ENCODE measurements at regions of chr5 and their contacts with region 1.

Region 1: GRCh38 chr5:14809369-14810155 is 62.0 kb downstream of the ANKH start:
- DNase-seq: peak; percentile 16 to 74 (median 57)
- ATAC-seq: peak; percentile 94
- H3K4me3 ChIP-seq: peak overlapping the region; percentile 21
- H3K4me3 Mint-ChIP-seq: peak overlapping the region; percentile 56 to 87 (median 78)
- H3K27ac ChIP-seq: peak overlapping the region; percentile 50
- H3K27ac Mint-ChIP-seq: peak overlapping the region; percentile 72 to 93 (median 91)
- H3K4me1 ChIP-seq: peaks cover 38 to 42% of the 10 kb centered on the region in 2 donors
- H3K4me1 Mint-ChIP-seq: peaks cover 40 to 85% (median 63%) of the 10 kb centered on the region in 7 donors
- H3K27me3 ChIP-seq: no peaks in the 10 kb centered on the region
- H3K27me3 Mint-ChIP-seq: no peaks in the 10 kb centered on the region

Region 2: DNA sequence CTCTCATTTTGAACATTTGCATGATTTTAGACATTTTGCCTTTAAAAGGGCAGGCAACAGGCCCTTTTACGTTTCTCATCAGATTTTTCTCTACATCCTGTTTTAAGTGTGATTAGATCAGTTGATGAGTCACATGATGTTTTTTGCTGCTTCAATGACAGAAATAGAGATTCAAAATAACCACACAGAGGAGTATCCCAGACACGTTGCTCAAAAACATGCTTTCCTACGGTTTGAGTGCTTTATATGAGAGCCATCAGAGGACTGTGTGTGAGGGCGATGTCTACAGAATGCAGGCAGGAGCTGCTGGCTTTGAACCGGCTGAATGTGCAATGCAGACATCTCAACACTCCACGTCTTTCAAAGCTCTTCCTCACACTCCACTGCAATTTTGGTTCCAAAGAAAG is 102.9 kb before region 1 on chr5:
- CTCF ChIA-PET with region 1: no interaction called
- POLR2A ChIA-PET with region 1: interaction called, 6 read pairs
- intact Hi-C with region 1: loop called in 1 of 2 experiments (anchors 1 kb)
- DNase-seq: peak in 8 of 9 donors; percentile 33 to 88 (median 84)
- ATAC-seq: peak; percentile 96
- H3K4me3 ChIP-seq: peak overlapping the region; percentile 4
- H3K4me3 Mint-ChIP-seq: peak overlapping the region; percentile 74 to 94 (median 86)
- H3K27ac ChIP-seq: peak overlapping the region; percentile 72
- H3K27ac Mint-ChIP-seq: peak overlapping the region; percentile 96 to 100 (median 99)
- H3K4me1 ChIP-seq: peaks cover 34 to 75% of the 10 kb centered on the region in 2 donors
- H3K4me1 Mint-ChIP-seq: peaks cover 50 to 96% (median 86%) of the 10 kb centered on the region in 7 donors
- H3K27me3 ChIP-seq: no peaks in the 10 kb centered on the region
- H3K27me3 Mint-ChIP-seq: no peaks in the 10 kb centered on the region

Region 3: GRCh38 chr5:14727428-14727865 is 82.1 kb before region 1 on chr5:
- CTCF ChIA-PET with region 1: no interaction called
- POLR2A ChIA-PET with region 1: no interaction called
- intact Hi-C with region 1: loop called in 1 of 2 experiments (anchors 5 kb)
- DNase-seq: peak; percentile 47 to 79 (median 69)
- ATAC-seq: peak; percentile 77
- H3K4me3 ChIP-seq: no peak overlapping the region
- H3K4me3 Mint-ChIP-seq: no peak overlapping the region
- H3K27ac ChIP-seq: no peak overlapping the region
- H3K27ac Mint-ChIP-seq: peak overlapping the region in 5 of 9 donors; percentile 5 to 49 (median 42)
- H3K4me1 ChIP-seq: peaks cover 0 to 4% of the 10 kb centered on the region in 2 donors
- H3K4me1 Mint-ChIP-seq: peaks cover 8 to 22% (median 16%) of the 10 kb centered on the region in 7 donors
- H3K27me3 ChIP-seq: no peaks in the 10 kb centered on the region
- H3K27me3 Mint-ChIP-seq: no peaks in the 10 kb centered on the region

Region 4: GRCh38 chr5:14775857-14776256 is 33.7 kb before region 1 on chr5:
- CTCF ChIA-PET with region 1: no interaction called
- POLR2A ChIA-PET with region 1: no interaction called
- intact Hi-C with region 1: loop called in 1 of 2 experiments (anchors 5 kb)
- DNase-seq: no peak
- ATAC-seq: no peak
- H3K4me3 ChIP-seq: no peak overlapping the region
- H3K4me3 Mint-ChIP-seq: no peak overlapping the region
- H3K27ac ChIP-seq: no peak overlapping the region
- H3K27ac Mint-ChIP-seq: peak overlapping the region in 4 of 9 donors; percentile 1 to 41 (median 25)
- H3K4me1 ChIP-seq: no peaks in the 10 kb centered on the region
- H3K4me1 Mint-ChIP-seq: peaks cover 3 to 81% (median 56%) of the 10 kb centered on the region in 7 donors
- H3K27me3 ChIP-seq: no peaks in the 10 kb centered on the region
- H3K27me3 Mint-ChIP-seq: no peaks in the 10 kb centered on the region

Region 5: DNA sequence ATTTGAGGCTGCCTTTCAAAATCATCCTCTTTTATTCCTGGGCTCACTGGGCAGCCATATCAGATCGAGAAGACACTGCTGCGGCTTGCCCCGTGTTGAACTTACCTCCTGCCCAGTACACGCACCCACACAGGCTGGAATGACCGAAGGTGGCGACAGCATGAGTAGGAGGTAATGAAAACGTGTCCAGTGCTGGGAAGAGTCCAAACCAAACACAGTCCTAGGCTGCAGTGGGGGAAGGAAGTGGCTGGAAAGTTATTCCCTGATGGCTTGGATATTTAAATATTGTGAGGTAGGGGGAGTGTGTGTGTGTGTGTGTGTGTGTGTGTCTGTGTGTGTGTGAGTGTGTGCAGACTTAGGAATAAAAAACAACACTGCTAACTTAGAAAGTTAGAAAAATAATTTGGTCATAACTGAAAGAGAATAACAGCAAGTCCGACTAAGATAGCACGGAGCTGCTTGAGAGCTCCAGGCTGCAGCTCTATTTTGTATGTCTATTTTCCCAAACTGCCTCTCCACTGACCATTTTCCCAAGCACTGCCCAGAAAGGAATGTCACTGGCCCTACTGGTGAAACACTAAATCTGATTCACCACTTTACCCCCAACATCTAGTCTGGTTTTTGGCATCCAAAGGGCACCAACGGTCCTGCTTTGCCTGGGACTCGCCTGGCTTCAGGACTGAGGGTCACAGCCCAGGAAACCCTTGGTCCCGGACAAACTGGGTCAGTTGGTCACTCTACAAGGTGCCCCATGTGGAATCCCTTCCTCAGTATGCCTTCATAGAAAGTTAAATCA is 20.8 kb after region 1 on chr5:
- CTCF ChIA-PET with region 1: interaction called, 3 read pairs
- POLR2A ChIA-PET with region 1: no interaction called
- intact Hi-C with region 1: loop called in 1 of 2 experiments (anchors 2 kb)
- DNase-seq: no peak
- ATAC-seq: no peak
- H3K4me3 ChIP-seq: no peak overlapping the region
- H3K4me3 Mint-ChIP-seq: no peak overlapping the region
- H3K27ac ChIP-seq: no peak overlapping the region
- H3K27ac Mint-ChIP-seq: peak overlapping the region in 3 of 9 donors; percentile 26 to 43 (median 37)
- H3K4me1 ChIP-seq: no peaks in the 10 kb centered on the region
- H3K4me1 Mint-ChIP-seq: peaks cover 6 to 99% (median 70%) of the 10 kb centered on the region in 7 donors
- H3K27me3 ChIP-seq: no peaks in the 10 kb centered on the region
- H3K27me3 Mint-ChIP-seq: no peaks in the 10 kb centered on the region

Region 6: GRCh38 chr5:14925326-14925725 is 115.8 kb after region 1 on chr5:
- CTCF ChIA-PET with region 1: no interaction called
- POLR2A ChIA-PET with region 1: no interaction called
- intact Hi-C with region 1: loop called in 1 of 2 experiments (anchors 5 kb)
- DNase-seq: no peak
- ATAC-seq: no peak
- H3K4me3 ChIP-seq: no peak overlapping the region
- H3K4me3 Mint-ChIP-seq: peak overlapping the region in 7 of 10 donors; percentile 17 to 72 (median 54)
- H3K27ac ChIP-seq: no peak overlapping the region
- H3K27ac Mint-ChIP-seq: peak overlapping the region; percentile 53 to 83 (median 78)
- H3K4me1 ChIP-seq: peaks cover 11 to 14% of the 10 kb centered on the region in 2 donors
- H3K4me1 Mint-ChIP-seq: peaks cover 6 to 38% (median 26%) of the 10 kb centered on the region in 7 donors
- H3K27me3 ChIP-seq: no peaks in the 10 kb centered on the region
- H3K27me3 Mint-ChIP-seq: no peaks in the 10 kb centered on the region

Region 7: DNA sequence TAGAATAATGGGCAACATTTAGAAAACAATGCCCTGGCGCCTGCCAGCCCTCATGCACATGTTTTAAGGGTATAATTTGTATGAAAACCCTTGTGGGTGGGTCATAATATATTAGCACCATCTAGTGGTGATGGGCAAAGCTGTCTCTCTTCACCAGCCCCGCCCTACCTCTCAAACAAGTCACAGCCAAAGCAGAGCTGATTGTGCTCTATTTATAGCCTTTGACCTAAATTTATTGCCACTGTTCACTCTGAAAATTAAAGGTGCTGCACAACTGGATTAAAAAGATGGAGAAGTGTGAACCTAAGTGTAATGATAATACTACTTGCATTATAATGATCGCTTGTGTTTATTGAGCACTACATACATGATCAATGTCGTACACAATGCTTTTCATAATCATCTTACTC is 194.0 kb after region 1 on chr5:
- CTCF ChIA-PET with region 1: no interaction called
- POLR2A ChIA-PET with region 1: no interaction called
- intact Hi-C with region 1: loop called in 1 of 2 experiments (anchors 1 kb)
- DNase-seq: peak; percentile 10 to 77 (median 69)
- ATAC-seq: peak; percentile 96
- H3K4me3 ChIP-seq: no peak overlapping the region
- H3K4me3 Mint-ChIP-seq: no peak overlapping the region
- H3K27ac ChIP-seq: no peak overlapping the region
- H3K27ac Mint-ChIP-seq: peak overlapping the region in 1 of 9 donors; percentile 33
- H3K4me1 ChIP-seq: no peaks in the 10 kb centered on the region
- H3K4me1 Mint-ChIP-seq: peaks cover 0 to 20% (median 0%) of the 10 kb centered on the region in 7 donors
- H3K27me3 ChIP-seq: peaks cover 0 to 3% of the 10 kb centered on the region in 2 donors
- H3K27me3 Mint-ChIP-seq: peaks cover 0 to 38% (median 0%) of the 10 kb centered on the region in 5 donors

Region 8: GRCh38 chr5:15103142-15103541 is 293.6 kb after region 1 on chr5:
- CTCF ChIA-PET with region 1: no interaction called
- POLR2A ChIA-PET with region 1: no interaction called
- intact Hi-C with region 1: no loop called
- DNase-seq: peak in 3 of 9 donors; percentile 2 to 10 (median 2)
- ATAC-seq: peak; percentile 74
- H3K4me3 ChIP-seq: no peak overlapping the region
- H3K4me3 Mint-ChIP-seq: peak overlapping the region in 1 of 10 donors; percentile 13
- H3K27ac ChIP-seq: no peak overlapping the region
- H3K27ac Mint-ChIP-seq: peak overlapping the region in 2 of 9 donors; percentile 24 to 56
- H3K4me1 ChIP-seq: no peaks in the 10 kb centered on the region
- H3K4me1 Mint-ChIP-seq: peaks cover 0 to 6% (median 2%) of the 10 kb centered on the region in 7 donors
- H3K27me3 ChIP-seq: no peaks in the 10 kb centered on the region
- H3K27me3 Mint-ChIP-seq: peaks cover 0 to 4% (median 0%) of the 10 kb centered on the region in 5 donors